Activated CD8-positive, alpha-beta T cell treated with anti-CD3 and anti-CD28 coated beads for 36 hours (primary cell): ENCODE measurements at regions of chr11 and their contacts with region 1.

Region 1: DNA sequence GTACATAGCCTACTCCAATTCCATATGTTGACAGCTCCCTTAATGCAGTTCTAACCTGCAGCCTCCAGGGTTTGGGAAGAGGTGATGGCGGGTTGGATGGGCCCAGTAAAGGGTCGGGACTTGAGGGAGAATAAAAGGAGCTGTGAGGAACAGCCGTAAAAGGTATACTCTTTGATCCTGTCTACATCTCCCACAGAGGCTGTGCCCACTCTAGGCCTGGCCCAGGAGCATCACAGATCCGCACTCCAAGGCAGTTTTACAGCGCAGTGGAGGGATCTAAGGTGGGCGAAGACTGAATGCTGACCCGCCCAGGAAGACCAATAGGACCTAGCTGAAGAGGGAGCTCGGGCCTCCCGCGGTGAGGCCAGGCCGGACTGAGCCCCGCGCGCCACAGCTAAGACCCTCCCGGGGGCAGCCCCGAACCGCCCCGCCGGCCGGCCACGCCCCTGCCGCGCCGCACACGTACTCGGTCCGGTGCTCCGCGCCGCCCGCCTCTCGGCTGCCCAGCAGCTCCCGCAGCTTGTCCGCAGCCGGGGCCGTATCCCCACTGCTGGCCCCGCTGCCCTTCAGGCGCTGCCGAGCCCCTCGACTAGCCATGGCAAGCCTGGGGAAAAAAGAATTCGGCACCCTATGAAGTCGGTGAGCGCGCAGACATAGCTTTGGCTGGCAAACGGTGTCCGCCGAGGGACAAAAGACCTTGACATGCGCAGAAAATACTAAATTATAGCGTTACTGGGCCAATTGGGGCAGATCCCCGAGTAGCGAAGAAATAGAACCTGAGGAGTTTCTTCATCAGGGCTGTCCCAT is at the start of gene ALG9:
- DNase-seq: peak; percentile 92
- ATAC-seq: peak; percentile 91
- H3K4me3 Mint-ChIP-seq: peak within 1 kb of the TSS; percentile 94
- H3K27ac Mint-ChIP-seq: peak within 1 kb of the TSS; percentile 91
- H3K4me1 Mint-ChIP-seq: peaks cover 27% of the 10 kb centered on the region
- H3K27me3 Mint-ChIP-seq: no peaks in the 10 kb centered on the region
- CTCF ChIP-seq: peak; percentile 21
- total RNA-seq, gene ALG9: 32.0 to 36.6 TPM

Region 2: DNA sequence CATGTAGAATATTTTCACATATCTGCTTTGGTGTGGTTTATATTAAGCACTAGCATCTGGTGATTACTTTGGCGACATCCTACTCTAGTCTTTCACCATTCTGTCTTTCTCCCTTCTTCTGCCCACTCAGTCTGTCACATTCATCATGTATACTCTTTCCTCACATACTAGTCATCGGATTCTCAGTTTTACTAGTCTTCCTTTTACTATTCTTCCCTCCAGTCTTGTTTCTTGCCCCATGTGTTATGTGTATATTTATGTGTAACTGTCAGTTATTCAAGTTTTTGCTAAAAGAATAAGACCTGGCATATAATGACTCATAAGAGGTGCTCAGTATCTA is 61.5 kb after region 1 on chr11:
- CTCF ChIA-PET with region 1: interaction called, 22 read pairs
- POLR2A ChIA-PET with region 1: interaction called, 3 read pairs
- intact Hi-C with region 1: no loop called
- DNase-seq: no peak
- ATAC-seq: peak; percentile 50
- H3K4me3 Mint-ChIP-seq: peak overlapping the region; percentile 1
- H3K27ac Mint-ChIP-seq: peak overlapping the region; percentile 58
- H3K4me1 Mint-ChIP-seq: peaks cover 35% of the 10 kb centered on the region
- H3K27me3 Mint-ChIP-seq: no peaks in the 10 kb centered on the region
- CTCF ChIP-seq: no peak